AG04450 (cell line): ENCODE measurements at regions of chr10 and their contacts with region 1.

Region 1: DNA sequence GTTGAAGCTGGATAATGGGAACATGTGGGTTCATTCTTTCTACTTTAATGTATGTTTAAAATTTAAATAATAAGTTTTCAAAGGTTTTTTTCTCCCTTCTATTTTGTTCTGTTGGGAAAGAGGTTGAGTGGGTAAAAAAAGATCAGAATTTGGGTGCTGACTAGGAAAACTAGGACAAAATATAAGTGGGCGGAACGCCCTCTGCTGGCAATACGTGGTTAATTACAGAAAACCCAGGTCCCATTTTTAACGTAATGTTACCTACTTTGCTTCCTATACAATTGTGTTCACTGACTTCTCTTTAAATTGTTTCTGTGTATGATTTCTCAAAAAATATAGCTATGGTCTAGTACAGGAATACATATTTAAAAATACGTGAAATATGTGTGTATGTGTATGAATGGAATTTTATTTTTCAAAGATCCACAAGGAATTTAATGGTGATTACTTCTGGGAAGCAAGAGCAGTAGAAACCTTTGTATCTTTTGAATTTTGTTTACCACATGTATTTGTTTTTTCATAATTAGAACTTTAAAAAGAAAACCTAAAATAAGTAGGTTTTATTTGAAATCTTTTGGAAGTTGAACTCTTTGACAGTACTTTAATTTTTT is 8.7 kb downstream of the ECD start:
- DNase-seq: peak; percentile 15
- H3K4me3 ChIP-seq: no peak overlapping the region
- H3K27ac ChIP-seq: no peak overlapping the region
- H3K27me3 ChIP-seq: no peaks in the 10 kb centered on the region
- CTCF ChIP-seq: peak; percentile 76

Region 2: DNA sequence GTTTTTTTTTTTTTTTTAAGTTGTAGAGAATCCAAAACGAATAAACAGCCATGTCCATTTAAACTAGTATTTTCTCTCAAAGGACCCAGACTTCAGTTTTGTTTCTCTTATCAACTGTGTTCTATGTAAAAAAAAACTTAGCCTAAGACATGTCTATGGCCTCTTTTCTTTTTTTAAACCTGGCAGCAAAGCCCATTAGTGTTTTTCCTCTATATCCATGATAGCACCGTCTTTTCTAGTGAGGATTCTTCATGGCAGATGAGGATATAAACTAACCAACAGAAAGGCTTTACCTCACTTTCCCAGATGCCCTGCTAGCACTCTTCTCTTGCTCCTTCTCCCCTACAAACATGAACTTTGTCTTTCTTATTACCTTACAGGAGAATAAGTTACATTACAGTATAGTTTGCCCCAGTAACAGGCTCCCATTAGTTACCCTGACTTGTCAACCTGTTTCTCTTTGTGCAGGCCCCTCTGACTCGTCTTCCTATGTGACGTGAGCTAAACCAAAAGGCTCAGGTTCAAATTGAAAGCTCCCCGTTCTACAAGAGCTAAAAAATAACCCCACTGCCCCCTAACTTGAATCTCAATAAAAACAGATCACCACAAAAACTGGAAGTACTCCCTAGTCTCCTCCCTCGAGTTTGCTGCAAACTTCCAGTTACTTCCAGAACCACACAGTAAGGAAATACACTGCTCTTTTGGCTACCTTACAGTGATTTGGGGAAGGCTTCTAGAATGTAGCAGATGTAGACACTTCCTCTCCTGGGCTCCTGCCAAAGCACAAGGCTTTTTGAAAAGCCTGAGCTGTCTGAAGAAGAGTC is 82.6 kb before region 1 on chr10:
- CTCF ChIA-PET with region 1: interaction called, 16 read pairs
- POLR2A ChIA-PET with region 1: no interaction called
- DNase-seq: peak; percentile 62
- H3K4me3 ChIP-seq: no peak overlapping the region
- H3K27ac ChIP-seq: peak overlapping the region; percentile 33
- H3K27me3 ChIP-seq: no peaks in the 10 kb centered on the region
- CTCF ChIP-seq: no peak

Region 3: GRCh38 chr10:73139251-73139650 is 19.9 kb before region 1 on chr10:
- CTCF ChIA-PET with region 1: interaction called, 29 read pairs
- POLR2A ChIA-PET with region 1: no interaction called
- DNase-seq: no peak
- H3K4me3 ChIP-seq: no peak overlapping the region
- H3K27ac ChIP-seq: no peak overlapping the region
- H3K27me3 ChIP-seq: no peaks in the 10 kb centered on the region
- CTCF ChIP-seq: no peak